Activated T-helper 1 cell treated with anti-CD3 and anti-CD28 coated beads, Interleukin-12 subunit alpha, Interleukin-12 subunit beta, Interleukin-2, Interleukin-4 antibody, amounts not matched to agents 30 ng/mL and 10 ng/mL and 1 ng/mL, durations not matched to agents 14 hours and 24 hours and 36 hours (primary cell): ENCODE measurements at regions of chr3 and their contacts with region 1.

Region 1: DNA sequence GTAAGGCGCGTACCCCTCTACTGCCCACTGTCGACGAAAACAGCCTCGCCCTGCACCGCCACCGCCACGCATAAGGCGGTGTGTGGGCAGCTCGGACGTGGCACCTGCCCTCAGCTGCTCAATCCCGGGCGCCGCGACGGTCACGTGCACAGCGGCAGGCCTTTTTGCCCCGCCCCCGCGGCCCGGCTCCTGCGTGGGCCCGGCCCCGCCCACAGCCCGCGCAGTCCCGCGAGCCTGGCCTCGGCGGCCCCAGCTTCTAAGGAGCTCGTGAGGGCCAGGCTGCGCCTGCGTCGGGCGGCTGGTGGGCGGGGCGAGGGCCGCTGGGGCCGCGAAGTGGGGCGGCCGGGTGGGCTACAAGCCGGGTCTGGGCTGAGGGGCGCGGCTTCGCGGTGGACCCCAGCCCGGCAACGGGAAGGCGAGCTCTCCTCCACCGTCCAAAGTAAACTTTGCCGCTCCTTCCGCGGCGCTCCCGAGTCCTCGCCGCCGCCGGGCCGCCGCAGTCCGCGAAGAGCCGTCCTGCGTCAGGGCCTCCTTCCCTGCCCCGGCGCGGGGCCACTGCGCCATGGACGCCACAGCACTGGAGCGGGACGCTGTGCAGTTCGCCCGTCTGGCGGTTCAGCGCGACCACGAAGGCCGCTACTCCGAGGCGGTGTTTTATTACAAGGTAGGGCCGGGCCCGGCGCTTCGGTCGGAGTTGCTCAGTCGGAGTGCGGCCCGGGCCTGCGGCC is at the start of gene CAPN7:
- DNase-seq: peak; percentile 94
- H3K4me3 Mint-ChIP-seq: peak within 1 kb of the TSS; percentile 91
- H3K27ac Mint-ChIP-seq: peak within 1 kb of the TSS; percentile 86
- H3K4me1 Mint-ChIP-seq: peaks cover 27% of the 10 kb centered on the region
- H3K27me3 Mint-ChIP-seq: peaks cover 1% of the 10 kb centered on the region
- total RNA-seq, gene CAPN7: 26.0 and 28.6 TPM in 2 replicates

Region 2: GRCh38 chr3:14651440-14652251 is 554.5 kb before region 1 on chr3 and contains the start of gene CCDC174:
- intact Hi-C with region 1: loop called (anchors 2 kb)
- DNase-seq: peak; percentile 94
- H3K4me3 Mint-ChIP-seq: peak within 1 kb of the TSS; percentile 99
- H3K27ac Mint-ChIP-seq: peak within 1 kb of the TSS; percentile 90
- H3K4me1 Mint-ChIP-seq: peaks cover 38% of the 10 kb centered on the region
- H3K27me3 Mint-ChIP-seq: peaks cover 4% of the 10 kb centered on the region
- total RNA-seq, gene CCDC174: 16.6 and 21.7 TPM in 2 replicates

Region 3: GRCh38 chr3:15108082-15108545 is 98.0 kb before region 1 on chr3:
- intact Hi-C with region 1: loop called (anchors 1 kb)
- DNase-seq: peak; percentile 55
- H3K4me3 Mint-ChIP-seq: no peak overlapping the region
- H3K27ac Mint-ChIP-seq: no peak overlapping the region
- H3K4me1 Mint-ChIP-seq: peaks cover 4% of the 10 kb centered on the region
- H3K27me3 Mint-ChIP-seq: peaks cover 11% of the 10 kb centered on the region

Region 4: DNA sequence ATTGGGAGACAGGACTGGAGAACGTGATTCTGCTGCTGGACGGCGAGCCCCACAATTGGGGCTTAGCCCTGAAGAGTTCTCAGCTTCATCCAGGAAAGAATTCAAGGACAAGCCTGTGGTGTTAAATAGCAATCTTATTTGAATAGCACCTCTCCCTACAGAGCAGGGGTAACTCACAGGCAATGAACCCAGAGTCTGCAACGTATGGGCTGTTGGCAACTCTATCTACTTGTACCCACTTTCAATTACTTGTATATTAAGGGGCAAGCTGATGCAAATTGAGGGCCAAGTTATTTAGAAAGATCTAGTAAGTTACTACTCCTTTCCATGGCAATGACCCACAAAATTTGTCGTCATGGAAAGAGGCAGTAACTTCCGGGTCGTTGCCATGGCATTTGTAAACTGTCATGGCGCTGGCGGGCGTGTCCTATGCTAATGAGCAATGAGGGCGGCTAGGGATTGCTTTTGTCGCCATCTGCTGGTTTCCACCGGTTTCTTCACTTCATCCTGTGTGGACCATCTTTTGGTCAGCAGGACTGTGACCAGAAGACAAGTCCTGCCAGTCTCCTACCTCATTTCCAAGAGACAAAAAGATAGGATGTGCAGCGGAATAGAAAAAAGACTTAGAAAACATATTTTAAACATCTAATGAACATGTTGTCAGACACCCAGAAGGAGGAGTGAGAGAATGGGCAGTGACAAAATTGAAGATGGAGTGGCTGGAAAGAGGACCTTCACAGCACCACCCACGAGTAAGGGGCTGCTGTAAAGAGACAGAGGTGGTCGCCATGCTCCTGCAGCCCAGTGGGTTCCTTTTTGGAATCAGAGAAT is 172.1 kb after region 1 on chr3:
- intact Hi-C with region 1: loop called (anchors 1 kb)
- DNase-seq: peak; percentile 93
- H3K4me3 Mint-ChIP-seq: no peak overlapping the region
- H3K27ac Mint-ChIP-seq: peak overlapping the region; percentile 80
- H3K4me1 Mint-ChIP-seq: peaks cover 20% of the 10 kb centered on the region
- H3K27me3 Mint-ChIP-seq: peaks cover 5% of the 10 kb centered on the region

Region 5: DNA sequence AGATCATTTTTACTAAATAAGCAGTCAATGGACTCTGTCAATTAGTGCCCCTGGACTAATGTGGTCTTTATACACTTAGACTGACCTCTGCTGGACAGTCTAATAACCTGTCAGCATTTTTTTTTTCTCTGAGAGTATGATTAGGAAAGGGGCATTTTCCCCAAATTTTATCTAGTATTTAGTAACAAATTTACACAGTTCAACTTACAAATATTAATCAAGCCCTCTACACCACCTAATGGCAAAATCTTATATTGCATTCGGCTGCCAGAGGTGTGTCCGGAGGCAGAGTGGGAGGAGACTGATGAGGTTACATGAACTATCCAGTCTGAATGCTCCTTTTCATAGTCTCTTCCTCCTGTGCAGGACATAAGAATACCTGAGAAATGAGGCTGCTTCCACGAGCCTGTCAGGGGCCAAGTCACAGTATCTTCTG is 351.4 kb after region 1 on chr3:
- intact Hi-C with region 1: loop called (anchors 1 kb)
- DNase-seq: peak; percentile 60
- H3K4me3 Mint-ChIP-seq: no peak overlapping the region
- H3K27ac Mint-ChIP-seq: no peak overlapping the region
- H3K4me1 Mint-ChIP-seq: peaks cover 32% of the 10 kb centered on the region
- H3K27me3 Mint-ChIP-seq: no peaks in the 10 kb centered on the region

Region 6: GRCh38 chr3:15859507-15860013 is 653.5 kb after region 1 on chr3:
- intact Hi-C with region 1: loop called (anchors 1 kb)
- DNase-seq: peak; percentile 78
- H3K4me3 Mint-ChIP-seq: peak overlapping the region; percentile 92
- H3K27ac Mint-ChIP-seq: peak overlapping the region; percentile 91
- H3K4me1 Mint-ChIP-seq: peaks cover 33% of the 10 kb centered on the region
- H3K27me3 Mint-ChIP-seq: peaks cover 3% of the 10 kb centered on the region

Region 7: DNA sequence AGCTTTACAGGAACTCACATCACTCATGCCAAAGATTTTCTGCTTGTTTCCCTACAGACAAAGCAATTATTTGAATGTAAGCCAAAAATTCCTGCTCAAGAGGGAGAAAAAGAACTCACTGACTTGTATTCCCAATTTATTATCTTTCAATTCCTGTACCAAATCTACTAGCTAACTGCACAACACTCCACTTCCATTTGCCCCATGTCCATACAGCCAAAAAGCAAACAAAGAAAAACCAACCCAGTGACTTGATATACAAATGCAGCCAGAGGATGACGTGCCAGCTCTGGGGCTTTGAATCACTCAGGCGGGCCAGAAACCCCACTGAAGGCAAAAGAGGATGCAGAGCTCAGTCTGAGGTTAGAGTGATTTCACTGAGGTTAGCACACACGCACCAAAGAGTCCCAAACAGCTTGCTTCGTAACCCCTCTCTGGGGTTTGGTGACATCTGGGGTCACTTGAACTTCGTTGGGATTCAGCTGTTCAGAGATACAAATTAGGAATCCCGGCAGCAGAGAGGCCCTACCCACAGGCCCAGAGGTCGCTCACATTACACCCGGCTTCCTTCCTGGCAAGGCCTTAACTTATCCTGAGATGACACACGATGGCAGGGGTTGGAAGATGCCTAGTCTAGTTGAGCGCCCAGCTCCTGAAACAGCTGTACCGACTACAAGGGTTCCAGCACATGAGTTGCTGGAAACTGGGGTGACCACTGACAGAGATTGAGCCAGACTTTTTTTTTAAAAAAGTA is 1305.8 kb after region 1 on chr3:
- intact Hi-C with region 1: loop called (anchors 10 kb)
- DNase-seq: peak; percentile 79
- H3K4me3 Mint-ChIP-seq: peak overlapping the region; percentile 97
- H3K27ac Mint-ChIP-seq: peak overlapping the region; percentile 89
- H3K4me1 Mint-ChIP-seq: peaks cover 83% of the 10 kb centered on the region
- H3K27me3 Mint-ChIP-seq: no peaks in the 10 kb centered on the region